ENCODE measurements at regions of chr17 and their contacts with region 1.

Region 1: GRCh38 chr17:29019475-29020181 is 13.8 kb upstream of the SEZ6 start:
- DNase-seq: peak; percentile 55

Region 2: GRCh38 chr17:28951991-28952975 is 67.3 kb before region 1 on chr17:
- in situ Hi-C with region 1: loop called (anchors 10 kb)
- DNase-seq: peak; percentile 100

Region 3: GRCh38 chr17:28967221-28968140 is 52.1 kb before region 1 on chr17:
- in situ Hi-C with region 1: no loop called
- DNase-seq: peak; percentile 55

Region 4: GRCh38 chr17:29084541-29085146 is 65.0 kb after region 1 on chr17:
- in situ Hi-C with region 1: loop called (anchors 10 kb)
- DNase-seq: no peak

Region 5: DNA sequence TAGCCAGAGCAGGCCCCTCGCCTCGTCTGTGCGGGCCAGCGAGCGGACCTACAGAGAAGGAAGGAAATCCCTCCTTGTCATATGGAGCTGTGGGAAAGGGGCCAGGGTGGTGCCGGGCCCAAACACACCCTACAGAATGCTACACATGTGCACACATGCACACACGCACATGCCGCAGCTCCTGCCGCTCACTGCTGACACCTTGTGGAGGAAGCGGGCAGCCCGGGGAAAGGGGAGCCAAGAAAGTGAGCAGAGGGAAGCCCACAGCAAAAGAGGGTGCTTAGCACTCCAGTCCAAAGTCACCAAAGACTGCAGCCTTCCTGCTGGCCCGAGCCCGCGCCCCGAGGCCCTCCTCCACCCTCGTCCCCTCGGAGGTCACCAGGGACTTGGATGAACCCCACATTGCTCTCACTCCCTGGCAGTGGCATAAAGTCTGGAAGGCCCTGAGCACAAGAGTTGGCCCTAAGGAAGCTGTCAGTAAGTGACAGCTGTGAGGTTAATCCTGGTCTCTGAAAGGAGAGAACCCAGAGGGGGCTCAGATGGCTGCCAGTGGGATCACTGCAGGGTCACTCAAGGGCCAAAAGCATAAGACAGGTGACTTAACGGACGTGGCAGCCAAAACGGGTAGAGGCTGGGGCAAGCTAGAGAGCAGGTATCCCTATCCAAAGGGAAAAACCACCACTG is 92.3 kb after region 1 on chr17:
- in situ Hi-C with region 1: no loop called
- DNase-seq: peak; percentile 84